Activated CD4-positive, alpha-beta memory T cell treated with anti-CD3 and anti-CD28 coated beads for 36 hours (primary cell): ENCODE measurements at regions of chr11 and their contacts with region 1.

Region 1: DNA sequence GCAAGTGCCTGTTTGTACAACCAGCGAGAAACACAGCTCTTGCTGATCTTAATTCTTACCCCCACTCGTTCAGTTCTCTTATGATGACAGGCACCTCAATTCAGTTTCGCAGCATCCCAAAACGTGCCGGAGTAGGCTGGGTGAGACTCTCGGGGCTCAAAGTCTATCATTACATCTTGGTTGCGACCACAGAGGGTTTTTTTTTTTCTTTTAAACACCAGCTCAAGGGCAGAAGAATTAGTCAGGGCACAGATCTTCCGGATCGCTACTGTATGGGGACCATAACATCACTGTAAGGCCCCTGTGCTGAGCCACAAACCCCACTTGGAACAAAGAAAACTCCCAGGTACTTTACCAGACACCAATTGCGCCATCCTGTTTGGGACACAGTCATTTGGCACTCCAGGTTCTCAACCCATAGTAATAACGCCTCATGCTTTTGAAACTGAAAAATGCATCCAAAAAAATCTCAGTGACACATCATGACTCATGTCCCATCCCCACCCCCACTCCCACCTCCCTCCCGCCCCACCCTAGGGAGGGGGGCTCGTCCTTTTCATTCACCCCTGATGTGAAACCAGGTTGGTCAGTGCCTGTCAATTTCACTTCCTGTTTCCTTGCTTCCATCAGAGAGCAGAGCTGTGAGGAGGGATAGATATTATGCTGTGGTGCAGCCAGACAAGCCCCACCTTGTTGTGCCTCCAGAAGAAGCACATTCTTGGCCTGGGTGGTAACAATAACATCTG is 41.0 kb upstream of the CD5 start:
- DNase-seq: peak; percentile 94
- H3K4me3 Mint-ChIP-seq: peak overlapping the region; percentile 67
- H3K27ac Mint-ChIP-seq: peak overlapping the region; percentile 98
- H3K4me1 Mint-ChIP-seq: peaks cover 92% of the 10 kb centered on the region
- H3K27me3 Mint-ChIP-seq: no peaks in the 10 kb centered on the region

Region 2: GRCh38 chr11:60951899-60952741 is 109.1 kb before region 1 on chr11 and contains the start of gene SLC15A3:
- CTCF ChIA-PET with region 1: no interaction called
- POLR2A ChIA-PET with region 1: no interaction called
- intact Hi-C with region 1: no loop called
- DNase-seq: peak; percentile 44
- H3K4me3 Mint-ChIP-seq: peak within 1 kb of the TSS; percentile 48
- H3K27ac Mint-ChIP-seq: no peak within 1 kb of the TSS
- H3K4me1 Mint-ChIP-seq: peaks cover 14% of the 10 kb centered on the region
- H3K27me3 Mint-ChIP-seq: peaks cover 25% of the 10 kb centered on the region
- total RNA-seq, gene SLC15A3: 1.3 to 1.8 TPM

Region 3: DNA sequence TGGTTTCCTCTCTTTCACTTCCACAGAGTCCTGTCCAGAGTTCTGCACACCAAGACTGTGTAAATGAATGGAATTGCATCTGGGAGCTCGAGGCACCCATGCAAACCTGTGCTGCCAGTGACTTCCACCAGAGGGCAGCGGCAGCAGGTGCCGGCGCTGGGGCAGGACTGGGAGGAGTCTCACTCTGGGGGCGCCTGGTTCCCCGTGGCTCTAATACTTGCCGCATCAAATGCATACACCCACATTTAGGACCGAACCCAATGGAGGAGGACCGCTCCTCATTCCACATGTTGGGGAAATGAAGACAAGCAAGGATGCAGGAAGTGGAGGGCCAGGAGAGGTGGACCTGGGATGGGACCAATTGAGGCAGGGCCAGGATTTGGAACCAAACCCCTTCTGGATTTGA is 90.9 kb before region 1 on chr11:
- CTCF ChIA-PET with region 1: interaction called, 4 read pairs
- POLR2A ChIA-PET with region 1: interaction called, 13 read pairs
- intact Hi-C with region 1: no loop called
- DNase-seq: peak; percentile 89
- H3K4me3 Mint-ChIP-seq: peak overlapping the region; percentile 95
- H3K27ac Mint-ChIP-seq: peak overlapping the region; percentile 99
- H3K4me1 Mint-ChIP-seq: peaks cover 15% of the 10 kb centered on the region
- H3K27me3 Mint-ChIP-seq: no peaks in the 10 kb centered on the region

Region 4: DNA sequence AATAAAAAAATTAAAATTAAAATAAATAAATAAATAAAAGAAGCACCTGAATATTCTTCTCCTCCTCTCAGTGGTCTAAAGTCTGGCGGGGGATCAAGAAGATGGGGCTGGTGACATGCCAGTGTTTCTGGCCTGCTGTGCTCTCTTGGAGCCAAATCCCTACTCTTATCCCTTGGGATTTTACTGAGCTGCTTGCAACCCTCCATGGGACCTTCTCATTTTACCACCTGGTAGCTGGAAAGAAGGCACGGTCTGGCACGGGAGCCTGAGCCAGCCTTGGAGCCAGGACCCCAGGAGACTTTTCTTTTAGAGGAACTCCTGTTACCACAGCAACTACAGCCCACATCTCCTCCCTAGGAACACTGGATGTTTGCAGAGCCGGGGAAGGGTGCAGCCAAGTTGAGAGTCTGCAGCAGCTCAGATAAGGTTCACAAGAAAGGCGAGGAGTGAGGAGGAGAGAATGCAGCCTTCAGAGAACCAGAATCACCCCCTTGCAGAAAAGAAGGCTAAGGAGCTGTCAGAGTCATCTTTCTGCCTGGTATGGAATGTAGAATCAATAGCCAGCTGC is 68.3 kb before region 1 on chr11:
- CTCF ChIA-PET with region 1: interaction called, 3 read pairs
- POLR2A ChIA-PET with region 1: interaction called, 54 read pairs
- intact Hi-C with region 1: loop called (anchors 1 kb)
- DNase-seq: peak; percentile 19
- H3K4me3 Mint-ChIP-seq: peak overlapping the region; percentile 68
- H3K27ac Mint-ChIP-seq: peak overlapping the region; percentile 97
- H3K4me1 Mint-ChIP-seq: peaks cover 81% of the 10 kb centered on the region
- H3K27me3 Mint-ChIP-seq: no peaks in the 10 kb centered on the region

Region 5: GRCh38 chr11:61028272-61028761 is 32.9 kb before region 1 on chr11:
- CTCF ChIA-PET with region 1: interaction called, 4 read pairs
- POLR2A ChIA-PET with region 1: interaction called, 27 read pairs
- intact Hi-C with region 1: loop called (anchors 1 kb)
- DNase-seq: peak; percentile 88
- H3K4me3 Mint-ChIP-seq: peak overlapping the region; percentile 83
- H3K27ac Mint-ChIP-seq: peak overlapping the region; percentile 96
- H3K4me1 Mint-ChIP-seq: peaks cover 77% of the 10 kb centered on the region
- H3K27me3 Mint-ChIP-seq: no peaks in the 10 kb centered on the region

Region 6: DNA sequence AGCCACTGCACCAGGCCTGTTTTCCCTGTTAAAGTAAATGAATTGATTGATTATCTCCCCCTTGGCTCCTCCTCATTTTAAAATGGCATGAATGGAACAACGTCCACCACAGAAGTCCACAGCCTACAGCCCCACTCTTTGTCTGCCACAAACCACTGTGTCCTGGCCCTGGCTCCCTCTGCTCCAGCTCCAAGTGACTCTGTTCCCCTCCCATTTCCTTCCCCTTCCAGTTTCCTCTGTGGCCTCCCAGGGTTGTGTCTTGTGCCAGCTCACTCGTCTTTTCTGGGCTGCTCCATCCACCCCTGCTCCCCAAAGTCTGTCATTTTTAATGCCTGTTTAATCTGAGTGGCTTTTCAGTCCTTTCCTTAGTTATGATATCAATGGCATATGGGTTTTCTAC is 11.4 kb before region 1 on chr11:
- CTCF ChIA-PET with region 1: interaction called, 6 read pairs
- POLR2A ChIA-PET with region 1: interaction called, 85 read pairs
- intact Hi-C with region 1: no loop called
- DNase-seq: peak; percentile 7
- H3K4me3 Mint-ChIP-seq: peak overlapping the region; percentile 27
- H3K27ac Mint-ChIP-seq: peak overlapping the region; percentile 77
- H3K4me1 Mint-ChIP-seq: peaks cover 82% of the 10 kb centered on the region
- H3K27me3 Mint-ChIP-seq: no peaks in the 10 kb centered on the region

Region 7: DNA sequence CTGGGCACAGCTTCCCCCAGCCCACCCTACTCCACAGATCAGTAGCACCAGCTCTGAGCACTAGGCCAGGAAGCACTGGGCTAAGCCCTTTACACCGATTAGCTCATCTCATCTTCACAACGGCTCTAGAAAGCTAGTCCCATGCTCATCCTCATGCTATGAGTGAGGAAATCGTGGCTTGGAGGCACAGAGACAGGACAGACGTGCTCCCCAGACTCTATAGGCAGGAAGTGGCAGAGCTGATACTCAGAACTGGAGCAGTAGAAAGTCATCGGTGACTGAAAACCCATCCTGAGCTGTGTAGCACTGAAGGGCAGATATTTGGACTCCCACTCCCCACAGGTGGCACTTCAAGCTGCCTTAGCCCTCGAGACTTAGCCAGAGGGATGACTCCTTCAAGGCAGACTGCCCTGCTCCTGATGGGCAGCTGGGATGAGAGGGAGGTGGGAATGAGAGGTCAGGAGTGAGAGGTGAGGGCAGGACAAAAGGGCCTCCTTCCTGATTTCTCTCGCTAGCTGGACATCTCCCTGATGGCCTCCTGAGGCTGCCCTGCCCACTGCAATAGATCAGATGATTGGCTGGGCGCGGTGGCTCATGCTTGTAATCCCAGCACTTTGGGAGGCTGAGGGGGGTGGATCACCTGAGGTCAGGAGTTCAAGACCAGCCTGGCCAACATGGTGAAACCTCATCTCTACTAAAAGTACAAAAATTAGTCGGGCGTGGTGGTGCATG is 50.7 kb after region 1 on chr11:
- CTCF ChIA-PET with region 1: interaction called, 11 read pairs
- POLR2A ChIA-PET with region 1: interaction called, 34 read pairs
- intact Hi-C with region 1: loop called (anchors 1 kb)
- DNase-seq: peak; percentile 89
- H3K4me3 Mint-ChIP-seq: no peak overlapping the region
- H3K27ac Mint-ChIP-seq: no peak overlapping the region
- H3K4me1 Mint-ChIP-seq: peaks cover 97% of the 10 kb centered on the region
- H3K27me3 Mint-ChIP-seq: no peaks in the 10 kb centered on the region

Region 8: DNA sequence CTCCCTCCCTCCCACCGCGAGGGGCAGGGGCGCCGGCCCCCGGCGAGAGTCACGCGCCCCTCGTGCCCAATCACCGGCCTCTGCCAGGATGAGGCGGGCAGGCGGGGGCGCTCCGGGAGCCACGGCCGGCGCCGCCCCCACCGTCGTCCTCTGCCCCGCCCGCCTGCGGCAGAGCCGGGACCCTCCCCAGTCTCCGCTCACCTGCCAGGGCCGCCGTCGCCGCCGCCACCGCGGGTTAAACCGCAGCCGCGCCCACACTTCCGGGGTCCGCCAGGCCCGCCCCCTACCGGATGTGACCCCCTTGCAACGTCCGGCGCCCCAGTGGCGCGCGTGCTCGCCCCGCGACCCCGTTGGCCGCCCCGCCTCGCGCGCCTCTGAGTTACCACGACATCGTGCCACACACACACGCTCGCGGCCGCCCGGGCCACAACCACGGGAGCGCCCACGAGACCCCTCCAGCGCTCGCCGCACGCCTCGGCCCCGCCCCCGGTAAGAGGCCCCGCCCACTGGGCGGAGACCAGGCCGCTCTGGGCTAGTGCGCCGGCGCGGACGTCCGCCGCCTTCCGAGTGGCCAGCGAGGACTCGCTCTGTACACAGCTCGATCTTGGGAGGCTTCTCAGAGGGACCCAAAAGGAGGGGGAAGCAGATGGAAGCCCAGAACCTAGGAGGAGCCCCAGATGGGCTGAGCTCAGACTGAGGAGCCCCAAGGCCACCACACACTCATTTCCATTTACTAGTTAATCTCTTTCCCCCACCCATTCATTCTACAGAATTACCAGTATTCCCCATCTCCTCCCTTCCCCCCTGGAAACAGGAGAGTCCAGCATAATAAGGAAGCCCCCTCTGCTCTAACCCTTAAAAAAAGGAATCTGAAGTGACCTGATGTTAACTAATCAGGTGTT is 100.2 kb after region 1 on chr11 and contains the start of gene VPS37C:
- CTCF ChIA-PET with region 1: no interaction called
- POLR2A ChIA-PET with region 1: no interaction called
- intact Hi-C with region 1: loop called (anchors 1 kb)
- DNase-seq: peak; percentile 94
- H3K4me3 Mint-ChIP-seq: peak within 1 kb of the TSS; percentile 85
- H3K27ac Mint-ChIP-seq: peak within 1 kb of the TSS; percentile 94
- H3K4me1 Mint-ChIP-seq: peaks cover 53% of the 10 kb centered on the region
- H3K27me3 Mint-ChIP-seq: peaks cover 2% of the 10 kb centered on the region
- total RNA-seq, gene VPS37C: 9.0 TPM

Region 9: DNA sequence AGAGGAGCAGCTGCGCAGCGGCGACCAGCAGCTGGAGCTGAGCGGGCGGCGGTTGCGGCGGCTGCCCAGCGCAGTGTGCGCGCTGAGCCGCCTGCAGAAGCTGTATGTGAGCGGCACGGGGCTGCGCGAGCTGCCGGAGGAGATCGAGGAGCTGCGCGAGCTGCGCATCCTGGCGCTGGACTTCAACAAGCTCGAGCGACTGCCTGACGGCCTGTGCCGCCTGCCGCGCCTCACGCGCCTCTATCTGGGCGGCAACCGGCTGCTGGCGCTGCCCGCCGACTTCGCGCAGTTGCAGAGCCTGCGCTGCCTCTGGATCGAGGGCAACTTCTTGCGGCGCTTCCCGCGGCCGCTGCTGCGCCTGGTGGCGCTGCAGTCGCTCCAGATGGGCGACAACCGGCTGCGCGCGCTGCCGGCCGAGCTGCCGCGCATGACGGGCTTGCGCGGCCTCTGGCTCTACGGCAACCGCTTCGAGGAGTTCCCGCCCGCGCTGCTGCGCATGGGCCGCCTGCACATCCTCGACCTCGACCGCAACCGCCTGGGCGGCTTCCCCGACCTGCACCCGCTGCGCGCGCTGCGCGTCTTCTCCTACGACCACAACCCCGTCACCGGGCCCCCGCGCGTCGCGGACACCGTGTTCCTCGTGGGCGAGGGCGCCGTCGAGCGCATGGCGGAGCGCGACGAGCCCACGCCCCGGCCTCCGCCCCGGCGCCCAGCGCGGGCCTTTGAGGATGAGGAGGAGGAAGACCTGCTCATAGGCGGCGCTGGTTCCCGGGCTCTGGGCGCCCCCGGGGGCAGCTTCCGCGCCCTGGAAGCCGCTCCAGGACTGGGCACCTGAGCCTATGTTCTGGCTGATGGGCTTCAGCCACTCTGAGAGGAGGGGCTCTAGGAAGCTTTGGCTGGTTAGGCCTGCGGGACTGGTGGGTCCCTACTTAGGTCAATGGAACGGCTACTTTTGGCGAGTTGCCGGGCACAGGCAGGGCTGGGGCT is 448.1 kb after region 1 on chr11:
- CTCF ChIA-PET with region 1: no interaction called
- POLR2A ChIA-PET with region 1: no interaction called
- intact Hi-C with region 1: no loop called
- DNase-seq: peak; percentile 84
- H3K4me3 Mint-ChIP-seq: peak overlapping the region; percentile 20
- H3K27ac Mint-ChIP-seq: no peak overlapping the region
- H3K4me1 Mint-ChIP-seq: peaks cover 8% of the 10 kb centered on the region
- H3K27me3 Mint-ChIP-seq: peaks cover 44% of the 10 kb centered on the region